ENCODE measurements at regions of chr3 and their contacts with region 1.

Region 1: GRCh38 chr3:160003520-160004128 is 15.0 kb downstream of the IL12A start:
- DNase-seq: peak in 11 of 35 experiments; percentile 7 to 39 (median 18)
- ATAC-seq: peak; percentile 27 to 48 (median 38)
- H3K4me3 ChIP-seq: no peak overlapping the region
- H3K4me3 Mint-ChIP-seq: no peak overlapping the region
- H3K27ac ChIP-seq: no peak overlapping the region
- H3K27ac Mint-ChIP-seq: no peak overlapping the region
- H3K4me1 ChIP-seq: no peaks in the 10 kb centered on the region
- H3K4me1 Mint-ChIP-seq: no peaks in the 10 kb centered on the region
- H3K27me3 ChIP-seq: no peaks in the 10 kb centered on the region
- H3K27me3 Mint-ChIP-seq: no peaks in the 10 kb centered on the region

Region 2: DNA sequence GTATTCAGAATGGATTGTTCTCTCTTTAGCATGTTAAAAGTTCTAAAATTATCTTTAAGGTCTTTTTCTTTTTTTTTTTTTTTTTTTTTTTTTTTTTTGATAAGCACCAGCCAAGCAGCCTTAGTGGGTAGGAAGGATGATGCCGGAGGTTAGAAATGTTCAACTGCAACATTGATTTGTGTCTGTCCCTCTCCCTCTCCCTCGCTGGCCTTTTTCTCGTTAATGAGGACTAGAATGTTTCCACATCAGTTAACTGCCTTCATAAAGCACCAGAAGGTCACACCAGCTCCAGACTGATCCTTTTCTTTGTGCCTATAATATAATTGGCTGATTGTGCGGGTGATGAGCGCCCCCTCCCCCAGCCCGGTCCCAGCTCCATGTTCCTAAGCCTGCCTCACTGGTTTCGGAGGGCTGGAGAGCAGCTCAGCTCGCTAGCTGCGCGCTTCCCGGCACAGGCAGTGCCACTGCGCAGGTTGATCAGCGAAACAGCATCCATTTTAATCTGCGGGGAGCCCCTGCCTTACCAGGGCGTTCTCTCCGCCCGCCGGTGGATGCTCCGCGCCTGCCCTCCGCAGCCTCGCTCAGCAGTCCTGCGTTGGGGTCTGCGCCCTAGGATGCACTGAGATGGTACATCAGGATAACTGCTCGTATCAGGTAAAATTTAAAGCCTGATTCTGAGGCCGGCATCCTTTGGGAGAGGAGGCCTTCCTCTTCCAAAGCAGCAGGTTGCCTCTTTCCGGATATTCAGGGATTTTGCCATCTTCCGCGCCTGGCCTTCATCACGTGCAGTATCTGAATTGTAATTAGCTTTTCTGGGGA is 163.9 kb before region 1 on chr3:
- CTCF ChIA-PET with region 1: interaction called in 1 of 2 experiments, 16 read pairs
- POLR2A ChIA-PET with region 1: no interaction called
- DNase-seq: peak in 1 of 35 experiments; percentile 1
- ATAC-seq: peak in 3 of 4 experiments; percentile 33 to 52 (median 43)
- H3K4me3 ChIP-seq: peak within 1 kb of the TSS in 1 of 2 donors; percentile 29
- H3K4me3 Mint-ChIP-seq: peak within 1 kb of the TSS in 1 of 3 donors; percentile 59
- H3K27ac ChIP-seq: no peak within 1 kb of the TSS
- H3K27ac Mint-ChIP-seq: no peak within 1 kb of the TSS
- H3K4me1 ChIP-seq: peaks cover 0 to 4% of the 10 kb centered on the region in 2 experiments
- H3K4me1 Mint-ChIP-seq: peaks cover 3 to 6% (median 3%) of the 10 kb centered on the region in 3 donors
- H3K27me3 ChIP-seq: peaks cover 0 to 10% of the 10 kb centered on the region in 2 experiments
- H3K27me3 Mint-ChIP-seq: peaks cover 17 to 23% of the 10 kb centered on the region in 2 donors

Region 3: DNA sequence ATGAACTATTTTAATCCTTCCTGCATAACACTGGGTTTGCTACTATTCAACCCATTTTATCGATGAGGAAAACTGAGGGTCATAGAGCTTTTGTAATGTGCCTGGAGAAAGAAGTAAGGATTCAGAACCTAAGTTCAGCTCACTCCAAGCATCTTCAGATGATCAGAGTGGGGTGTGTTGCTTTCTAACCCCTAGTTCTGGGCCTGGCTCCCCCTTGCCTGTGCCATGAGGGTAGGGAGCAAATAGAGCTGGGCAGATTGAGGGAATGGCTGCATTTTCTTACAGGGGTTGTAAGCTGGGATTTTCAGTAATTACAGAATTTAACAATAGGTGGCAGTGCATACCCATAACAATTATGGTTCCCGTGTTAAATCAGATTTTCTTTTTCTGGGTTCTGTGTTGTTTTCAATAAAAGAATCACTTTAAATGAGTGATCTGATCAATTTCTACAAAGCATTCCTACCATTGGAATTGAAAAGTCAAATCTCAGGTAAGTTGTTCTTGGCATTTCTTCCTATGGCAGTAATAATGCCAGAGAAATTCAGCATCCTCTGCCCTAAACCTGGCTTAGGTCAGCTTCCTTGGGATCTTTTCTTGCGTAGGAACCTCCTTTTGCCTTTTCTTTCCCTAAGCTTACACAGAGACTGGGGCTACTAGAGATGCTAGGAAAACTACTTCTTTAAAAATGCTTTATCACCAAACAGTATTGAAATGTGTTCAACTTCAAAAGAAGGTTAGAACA is 118.8 kb before region 1 on chr3:
- CTCF ChIA-PET with region 1: interaction called, 7 to 13 read pairs
- POLR2A ChIA-PET with region 1: no interaction called
- DNase-seq: peak in 1 of 35 experiments; percentile 38
- ATAC-seq: no peak
- H3K4me3 ChIP-seq: no peak overlapping the region
- H3K4me3 Mint-ChIP-seq: no peak overlapping the region
- H3K27ac ChIP-seq: no peak overlapping the region
- H3K27ac Mint-ChIP-seq: no peak overlapping the region
- H3K4me1 ChIP-seq: no peaks in the 10 kb centered on the region
- H3K4me1 Mint-ChIP-seq: no peaks in the 10 kb centered on the region
- H3K27me3 ChIP-seq: peaks cover 0 to 7% of the 10 kb centered on the region in 2 experiments
- H3K27me3 Mint-ChIP-seq: peaks cover 0 to 14% of the 10 kb centered on the region in 2 donors

Region 4: DNA sequence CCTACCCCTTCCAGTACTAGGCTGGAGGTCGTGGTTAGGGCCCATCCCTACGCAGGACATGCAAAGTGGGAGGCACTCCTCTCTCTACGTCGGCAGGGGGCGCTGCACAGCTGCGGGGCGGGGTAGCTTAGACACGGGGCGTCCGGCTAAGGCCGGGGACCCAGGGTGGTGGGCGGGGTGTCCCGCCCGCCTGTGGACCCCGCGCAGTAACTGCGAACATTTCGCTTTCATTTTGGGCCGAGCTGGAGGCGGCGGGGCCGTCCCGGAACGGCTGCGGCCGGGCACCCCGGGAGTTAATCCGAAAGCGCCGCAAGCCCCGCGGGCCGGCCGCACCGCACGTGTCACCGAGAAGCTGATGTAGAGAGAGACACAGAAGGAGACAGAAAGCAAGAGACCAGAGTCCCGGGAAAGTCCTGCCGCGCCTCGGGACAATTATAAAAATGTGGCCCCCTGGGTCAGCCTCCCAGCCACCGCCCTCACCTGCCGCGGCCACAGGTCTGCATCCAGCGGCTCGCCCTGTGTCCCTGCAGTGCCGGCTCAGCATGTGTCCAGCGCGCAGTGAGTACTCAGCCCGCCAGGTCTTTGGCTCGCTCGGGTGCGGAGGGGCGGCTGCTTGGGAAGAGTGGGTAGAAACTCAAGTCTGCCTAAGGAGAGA is 14.9 kb before region 1 on chr3 and contains the start of gene IL12A:
- CTCF ChIA-PET with region 1: interaction called, 5 to 28 read pairs
- POLR2A ChIA-PET with region 1: no interaction called
- DNase-seq: peak; percentile 59 to 87 (median 76)
- ATAC-seq: peak; percentile 94 to 96 (median 94)
- H3K4me3 ChIP-seq: peak within 1 kb of the TSS; percentile 60 to 83
- H3K4me3 Mint-ChIP-seq: peak within 1 kb of the TSS; percentile 80 to 84 (median 84)
- H3K27ac ChIP-seq: no peak within 1 kb of the TSS
- H3K27ac Mint-ChIP-seq: peak within 1 kb of the TSS; percentile 24 to 53
- H3K4me1 ChIP-seq: peaks cover 7 to 27% of the 10 kb centered on the region in 2 experiments
- H3K4me1 Mint-ChIP-seq: peaks cover 19 to 29% (median 28%) of the 10 kb centered on the region in 3 donors
- H3K27me3 ChIP-seq: peaks cover 0 to 8% of the 10 kb centered on the region in 2 experiments
- H3K27me3 Mint-ChIP-seq: peaks cover 0 to 2% of the 10 kb centered on the region in 2 donors
- total RNA-seq, gene IL12A: 0.57 to 3.1 (median 0.69) TPM

Region 5: DNA sequence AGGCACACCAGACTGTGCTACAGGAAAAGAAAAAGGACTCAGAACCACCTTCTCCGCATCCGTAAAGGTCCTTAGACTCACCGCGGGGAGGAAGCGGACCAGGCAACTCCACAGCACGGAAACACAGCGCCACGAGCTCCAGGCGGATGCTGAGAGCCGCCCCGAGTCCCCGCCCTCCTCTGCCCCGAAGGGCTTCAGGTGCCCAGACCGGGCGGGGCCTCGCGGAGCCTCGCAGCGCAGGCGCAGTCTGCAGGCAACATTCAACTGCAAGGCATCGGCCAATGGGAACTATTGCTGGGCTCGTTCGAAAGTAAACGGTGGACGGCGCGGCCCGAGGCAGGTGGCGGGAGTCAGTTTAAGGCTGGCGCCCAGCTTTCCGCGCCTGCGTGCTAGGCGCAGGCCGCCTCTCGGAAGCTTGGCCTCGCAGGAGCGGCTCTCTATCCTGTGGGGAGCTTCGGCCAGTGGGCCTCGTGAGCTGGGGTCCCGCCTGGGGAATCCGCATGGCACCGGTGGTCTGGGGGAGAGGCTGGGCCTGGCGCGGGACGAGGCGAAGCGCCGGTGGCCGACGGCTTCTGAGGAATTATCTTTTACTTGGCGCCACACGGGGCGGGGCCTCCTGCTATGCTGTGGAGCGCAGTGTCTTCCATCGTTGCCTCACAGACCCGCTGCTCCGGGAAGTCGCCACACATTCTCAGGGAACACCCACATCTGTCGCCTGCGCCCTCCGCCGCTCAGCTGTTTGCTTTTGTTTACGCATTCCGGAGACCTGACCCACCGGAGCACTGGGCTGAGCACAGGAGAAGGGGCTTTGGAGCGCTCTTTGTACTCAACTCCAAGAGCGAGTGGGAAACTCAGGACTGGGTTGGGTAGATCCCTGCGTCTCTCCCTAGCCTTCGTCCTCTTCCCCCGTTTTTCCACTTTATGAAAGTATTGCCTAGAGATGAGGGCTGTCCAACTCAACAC is 446.3 kb after region 1 on chr3 and contains the start of gene TRIM59:
- CTCF ChIA-PET with region 1: no interaction called
- POLR2A ChIA-PET with region 1: interaction called in 1 of 2 experiments, 13 read pairs
- DNase-seq: peak; percentile 89 to 99 (median 96)
- ATAC-seq: peak; percentile 95 to 98 (median 98)
- H3K4me3 ChIP-seq: peak within 1 kb of the TSS; percentile 59 to 89
- H3K4me3 Mint-ChIP-seq: peak within 1 kb of the TSS; percentile 93 to 99 (median 97)
- H3K27ac ChIP-seq: peak within 1 kb of the TSS; percentile 90
- H3K27ac Mint-ChIP-seq: peak within 1 kb of the TSS; percentile 94 to 98
- H3K4me1 ChIP-seq: peaks cover 7 to 26% of the 10 kb centered on the region in 2 experiments
- H3K4me1 Mint-ChIP-seq: peaks cover 32 to 47% (median 46%) of the 10 kb centered on the region in 3 donors
- H3K27me3 ChIP-seq: peaks cover 0 to 4% of the 10 kb centered on the region in 2 experiments
- H3K27me3 Mint-ChIP-seq: no peaks in the 10 kb centered on the region
- total RNA-seq, gene TRIM59: 14.5 to 25.2 (median 17.7) TPM